ENCODE measurements at regions of chr12 and their contacts with region 1.

Region 1: DNA sequence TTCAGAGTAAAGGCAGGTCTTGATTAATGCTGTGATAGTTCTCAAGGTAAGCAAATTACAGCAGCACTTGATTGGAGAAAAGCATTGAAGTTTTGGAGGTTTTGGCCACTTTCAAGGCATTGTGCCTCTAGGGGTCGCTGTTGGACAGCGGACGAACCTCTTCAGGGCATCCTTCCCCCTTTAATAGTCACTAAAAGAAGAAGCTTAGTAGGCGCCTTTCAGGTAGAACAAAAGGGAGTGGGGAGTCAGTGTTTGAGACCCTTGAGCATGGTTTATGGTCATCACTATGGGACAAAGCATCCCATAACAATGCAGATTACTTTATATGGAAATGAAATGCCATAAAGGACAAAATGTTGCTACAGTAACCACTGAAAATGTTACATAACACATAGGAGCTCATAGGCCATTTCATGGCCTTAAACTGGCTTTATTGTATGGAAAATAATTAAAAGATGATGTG is 199.5 kb upstream of the DCN start:
- DNase-seq: peak; percentile 84 to 94
- H3K4me3 ChIP-seq: peak overlapping the region; percentile 1 to 65 (median 19); a peak in 5 of 8 replicates
- H3K27ac ChIP-seq: peak overlapping the region; percentile 76
- H3K4me1 ChIP-seq: peaks cover 0 to 10% (median 1%) of the 10 kb centered on the region in 4 experiments; a peak in 5 of 7 replicates
- H3K27me3 ChIP-seq: no peaks in the 10 kb centered on the region
- CTCF ChIP-seq: peak; percentile 55 to 85 (median 69)
- EP300 ChIP-seq: no peak
- POLR2A ChIP-seq: no peak
- RAD21 ChIP-seq: peak; percentile 95 to 96

Region 2: DNA sequence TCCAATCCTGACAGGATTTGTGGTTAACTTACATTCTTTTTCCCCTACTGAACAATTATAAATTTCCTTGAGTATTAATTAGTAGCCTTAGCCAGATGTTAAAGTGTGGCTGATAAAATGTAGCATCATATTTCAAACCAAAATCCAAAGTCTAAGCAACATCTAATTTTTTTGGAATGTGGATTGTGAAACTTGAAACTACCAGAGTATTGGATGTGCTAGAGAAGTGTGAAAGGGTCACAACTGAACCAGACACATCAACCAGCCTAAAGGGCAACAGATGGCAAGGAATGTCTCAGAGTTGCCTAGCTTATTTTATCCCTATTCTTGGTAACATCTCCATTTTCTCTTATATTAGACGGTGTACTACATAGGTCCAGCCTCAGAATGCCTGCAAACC is 46.4 kb before region 1 on chr12:
- CTCF ChIA-PET with region 1: no interaction called
- POLR2A ChIA-PET with region 1: no interaction called
- DNase-seq: no peak
- H3K4me3 ChIP-seq: no peak overlapping the region
- H3K27ac ChIP-seq: no peak overlapping the region
- H3K4me1 ChIP-seq: no peaks in the 10 kb centered on the region
- H3K27me3 ChIP-seq: no peaks in the 10 kb centered on the region
- CTCF ChIP-seq: no peak
- EP300 ChIP-seq: no peak
- POLR2A ChIP-seq: no peak
- RAD21 ChIP-seq: no peak

Region 3: GRCh38 chr12:91367234-91367849 is 14.8 kb before region 1 on chr12:
- CTCF ChIA-PET with region 1: interaction called, 41 read pairs
- POLR2A ChIA-PET with region 1: interaction called, 3 read pairs
- DNase-seq: no peak
- H3K4me3 ChIP-seq: no peak overlapping the region
- H3K27ac ChIP-seq: no peak overlapping the region
- H3K4me1 ChIP-seq: peaks cover 2 to 7% (median 6%) of the 10 kb centered on the region in 4 experiments; a peak in 3 of 7 replicates
- H3K27me3 ChIP-seq: peaks cover 0 to 2% (median 0%) of the 10 kb centered on the region in 4 experiments; a peak in 1 of 7 replicates
- CTCF ChIP-seq: peak in 2 of 3 experiments; percentile 14 to 37; a peak in 2 of 4 replicates
- EP300 ChIP-seq: no peak
- POLR2A ChIP-seq: no peak
- RAD21 ChIP-seq: peak; percentile 49 to 55

Region 4: GRCh38 chr12:91400271-91400670 is 18.2 kb after region 1 on chr12:
- CTCF ChIA-PET with region 1: interaction called, 12 read pairs
- POLR2A ChIA-PET with region 1: no interaction called
- DNase-seq: no peak
- H3K4me3 ChIP-seq: no peak overlapping the region
- H3K27ac ChIP-seq: no peak overlapping the region
- H3K4me1 ChIP-seq: no peaks in the 10 kb centered on the region
- H3K27me3 ChIP-seq: no peaks in the 10 kb centered on the region
- CTCF ChIP-seq: no peak
- EP300 ChIP-seq: no peak
- POLR2A ChIP-seq: no peak
- RAD21 ChIP-seq: no peak

Region 5: DNA sequence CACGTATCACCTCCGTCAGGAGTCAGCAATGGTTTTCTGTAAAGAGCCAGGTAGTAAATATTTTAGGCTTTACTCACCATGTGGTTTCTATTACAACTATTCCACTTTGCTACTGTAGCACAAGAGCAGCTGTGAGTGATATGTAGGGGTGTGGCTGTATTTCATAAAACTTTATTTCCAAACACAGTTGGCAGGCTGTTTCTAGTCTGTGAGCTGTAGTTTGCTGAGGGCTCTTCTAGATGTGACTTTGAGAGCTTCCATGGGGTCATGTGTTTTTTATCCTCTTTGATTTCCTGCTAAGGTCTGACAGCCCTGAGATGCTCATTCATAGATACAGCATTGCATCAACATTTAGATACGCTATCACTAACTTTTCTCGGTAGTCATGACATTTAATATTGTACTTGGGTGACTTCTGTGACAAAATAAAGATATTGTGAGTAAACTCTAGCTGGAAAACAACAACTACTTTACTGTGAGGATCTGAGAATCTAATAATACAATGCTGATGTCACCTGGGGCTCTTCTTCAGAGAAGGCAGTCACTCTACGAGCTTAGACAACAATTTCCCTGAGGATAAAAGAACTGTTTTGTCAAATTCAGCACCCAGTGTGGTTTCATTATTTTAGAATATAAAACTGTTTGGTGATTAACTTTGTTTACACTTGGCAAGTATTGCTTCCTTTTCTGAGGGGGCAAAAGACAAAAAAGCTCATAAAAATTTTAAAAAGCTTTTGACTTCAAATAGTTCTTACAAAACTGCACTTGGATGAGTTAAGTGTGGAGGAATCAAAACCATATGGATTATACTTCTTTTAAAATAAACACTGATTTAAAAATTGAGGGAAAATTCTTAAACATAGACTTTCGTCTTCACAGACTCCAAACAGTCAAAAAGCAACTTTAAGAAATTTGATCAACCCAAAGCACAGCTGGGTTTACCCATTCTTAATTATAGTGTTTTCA is 31.8 kb after region 1 on chr12:
- CTCF ChIA-PET with region 1: no interaction called
- POLR2A ChIA-PET with region 1: no interaction called
- DNase-seq: no peak
- H3K4me3 ChIP-seq: no peak overlapping the region
- H3K27ac ChIP-seq: no peak overlapping the region
- H3K4me1 ChIP-seq: peaks cover 0 to 2% (median 0%) of the 10 kb centered on the region in 4 experiments; a peak in 1 of 7 replicates
- H3K27me3 ChIP-seq: no peaks in the 10 kb centered on the region
- CTCF ChIP-seq: no peak
- EP300 ChIP-seq: no peak
- POLR2A ChIP-seq: no peak
- RAD21 ChIP-seq: no peak

Region 6: GRCh38 chr12:91483471-91483985 is 101.4 kb after region 1 on chr12:
- CTCF ChIA-PET with region 1: no interaction called
- POLR2A ChIA-PET with region 1: no interaction called
- DNase-seq: no peak
- H3K4me3 ChIP-seq: no peak overlapping the region
- H3K27ac ChIP-seq: no peak overlapping the region
- H3K4me1 ChIP-seq: no peaks in the 10 kb centered on the region
- H3K27me3 ChIP-seq: no peaks in the 10 kb centered on the region
- CTCF ChIP-seq: no peak
- EP300 ChIP-seq: no peak
- POLR2A ChIP-seq: no peak
- RAD21 ChIP-seq: no peak

Region 7: GRCh38 chr12:91811481-91812287 is 429.6 kb after region 1 on chr12:
- CTCF ChIA-PET with region 1: interaction called, 14 read pairs
- POLR2A ChIA-PET with region 1: no interaction called
- DNase-seq: peak in 1 of 2 experiments; percentile 89
- H3K4me3 ChIP-seq: no peak overlapping the region
- H3K27ac ChIP-seq: no peak overlapping the region
- H3K4me1 ChIP-seq: no peaks in the 10 kb centered on the region
- H3K27me3 ChIP-seq: peaks cover 0 to 1% (median 0%) of the 10 kb centered on the region in 4 experiments; a peak in 1 of 7 replicates
- CTCF ChIP-seq: peak; percentile 14 to 59 (median 48)
- EP300 ChIP-seq: no peak
- POLR2A ChIP-seq: no peak
- RAD21 ChIP-seq: peak; percentile 69 to 73

Region 8: GRCh38 chr12:92145731-92146496 is 763.8 kb after region 1 on chr12 and contains the start of gene BTG1:
- CTCF ChIA-PET with region 1: interaction called, 8 read pairs
- POLR2A ChIA-PET with region 1: interaction called, 31 read pairs
- DNase-seq: peak; percentile 98 to 100
- H3K4me3 ChIP-seq: peak within 1 kb of the TSS; percentile 86 to 93 (median 88)
- H3K27ac ChIP-seq: peak within 1 kb of the TSS; percentile 93
- H3K4me1 ChIP-seq: peaks cover 2 to 4% (median 3%) of the 10 kb centered on the region in 4 experiments; a peak in 4 of 7 replicates
- H3K27me3 ChIP-seq: no peaks in the 10 kb centered on the region
- CTCF ChIP-seq: no peak
- EP300 ChIP-seq: no peak
- POLR2A ChIP-seq: peak; percentile 100
- RAD21 ChIP-seq: 0 out of 4 replicates have a peak, but pooled peaks of 1 of the 2 experiments have one; percentile 9
- total RNA-seq, gene BTG1: 31.6 and 32.7 TPM in 2 replicates

Region 9: GRCh38 chr12:92570056-92570753 is 1188.1 kb after region 1 on chr12:
- CTCF ChIA-PET with region 1: interaction called, 17 read pairs
- POLR2A ChIA-PET with region 1: no interaction called
- DNase-seq: peak in 1 of 2 experiments; percentile 63
- H3K4me3 ChIP-seq: no peak overlapping the region
- H3K27ac ChIP-seq: no peak overlapping the region
- H3K4me1 ChIP-seq: peaks cover 0 to 4% (median under 1%) of the 10 kb centered on the region in 4 experiments; a peak in 2 of 7 replicates
- H3K27me3 ChIP-seq: no peaks in the 10 kb centered on the region
- CTCF ChIP-seq: peak in 2 of 3 experiments; percentile 50 to 70; a peak in 3 of 4 replicates
- EP300 ChIP-seq: no peak
- POLR2A ChIP-seq: no peak
- RAD21 ChIP-seq: peak; percentile 85 to 90

Region 10: GRCh38 chr12:92649511-92650227 is 1267.6 kb after region 1 on chr12:
- CTCF ChIA-PET with region 1: interaction called, 10 read pairs
- POLR2A ChIA-PET with region 1: interaction called, 4 read pairs
- DNase-seq: peak; percentile 33 to 51
- H3K4me3 ChIP-seq: no peak overlapping the region
- H3K27ac ChIP-seq: no peak overlapping the region
- H3K4me1 ChIP-seq: peaks cover 2 to 8% (median 4%) of the 10 kb centered on the region in 4 experiments; a peak in 6 of 7 replicates
- H3K27me3 ChIP-seq: no peaks in the 10 kb centered on the region
- CTCF ChIP-seq: peak; percentile 14 to 78 (median 70)
- EP300 ChIP-seq: no peak
- POLR2A ChIP-seq: no peak
- RAD21 ChIP-seq: peak; percentile 90 to 94